ENCODE measurements at regions of chr2 and their contacts with region 1.

Region 1: DNA sequence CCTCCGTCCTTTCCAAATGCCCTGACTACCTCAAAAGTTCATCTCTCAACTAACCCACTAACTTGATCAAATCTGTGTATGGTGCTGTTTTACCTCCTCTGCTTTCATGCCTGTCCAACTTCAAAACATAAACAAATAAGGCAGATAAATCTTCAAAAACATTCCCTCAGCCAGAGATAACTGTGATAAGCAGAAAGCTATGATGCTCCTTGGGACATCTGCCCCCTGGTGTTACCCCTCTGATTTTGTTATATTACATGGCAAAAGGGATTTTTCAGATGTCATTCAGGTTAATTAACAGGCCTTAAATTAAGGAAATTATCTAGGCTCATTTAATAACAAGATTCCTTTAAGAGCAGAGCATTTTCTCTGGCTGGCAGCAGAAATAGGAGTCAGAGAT is 810.8 kb upstream of the CHAC2 start:
- DNase-seq: peak; percentile 49

Region 2: DNA sequence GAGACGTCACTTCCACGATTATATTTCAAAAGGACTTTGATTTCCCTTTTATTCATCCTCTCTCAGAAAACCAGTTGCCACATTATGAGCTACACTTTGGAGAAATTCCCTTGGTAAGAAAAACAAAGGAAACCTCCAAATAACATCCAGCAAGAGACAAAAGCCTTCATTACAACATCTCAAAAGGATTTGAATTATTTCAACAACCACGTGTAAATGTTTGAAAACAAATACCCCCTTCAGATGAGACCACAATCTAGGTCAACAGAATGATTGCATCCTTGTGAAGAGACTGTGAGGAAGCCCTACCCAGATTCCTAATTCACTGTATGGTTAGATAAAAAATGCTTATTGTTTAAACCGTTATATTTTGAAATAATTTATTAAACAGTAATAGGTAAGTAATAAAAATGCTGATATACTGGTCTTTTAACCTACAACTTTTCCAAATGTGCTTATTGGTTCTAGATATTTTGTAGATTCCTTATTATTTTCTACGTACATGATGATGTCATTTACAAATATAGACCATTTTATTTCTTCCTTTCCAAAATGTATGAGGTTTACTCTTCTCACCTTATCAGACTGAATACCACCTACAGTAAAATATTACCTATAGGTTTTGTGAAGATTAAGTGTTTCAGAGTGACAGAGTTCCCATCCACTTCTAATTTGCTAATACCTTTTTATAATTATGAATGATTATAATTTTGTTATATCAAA is 111.9 kb before region 1 on chr2:
- in situ Hi-C with region 1: loop called (anchors 25 kb)
- DNase-seq: peak; percentile 73

Region 3: GRCh38 chr2:53058526-53058925 is 101.8 kb after region 1 on chr2:
- in situ Hi-C with region 1: no loop called
- DNase-seq: no peak

Region 4: GRCh38 chr2:53104263-53104662 is 147.5 kb after region 1 on chr2:
- in situ Hi-C with region 1: no loop called
- DNase-seq: peak; percentile 95

Measured in SK-MEL-5 (cell line).